ENCODE measurements at regions of chr11 and their contacts with region 1.

Region 1: GRCh38 chr11:22343371-22344032 is 5.3 kb downstream of the SLC17A6 start:
- DNase-seq: no peak
- H3K4me3 ChIP-seq: no peak overlapping the region
- H3K27ac ChIP-seq: no peak overlapping the region
- H3K4me1 ChIP-seq: no peaks in the 10 kb centered on the region
- H3K27me3 ChIP-seq: peaks cover 84% of the 10 kb centered on the region
- CTCF ChIP-seq: no peak
- EP300 ChIP-seq: no peak
- POLR2A ChIP-seq: no peak

Region 2: DNA sequence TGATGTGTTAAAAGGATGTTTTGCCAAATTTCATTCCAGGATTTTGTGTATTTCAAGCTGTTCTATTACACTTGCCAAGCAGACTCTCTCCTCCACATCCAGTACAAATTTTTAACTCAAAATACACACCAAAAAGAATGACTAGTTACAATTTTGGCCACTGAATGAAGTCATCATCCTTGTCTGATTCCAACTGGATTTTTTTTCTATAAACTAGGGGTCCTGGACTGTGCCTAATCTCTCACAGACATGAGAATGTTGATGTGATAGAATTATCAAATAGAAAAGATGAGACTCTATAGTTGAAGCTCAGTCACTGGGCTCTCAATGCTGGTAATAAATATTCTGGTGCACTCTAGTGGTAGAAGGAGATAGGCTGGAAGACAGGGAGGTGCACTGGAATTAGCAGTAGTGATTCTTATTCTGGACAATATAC is 196.3 kb after region 1 on chr11:
- in situ Hi-C with region 1: no loop called
- intact Hi-C with region 1: loop called (anchors 10 kb)
- DNase-seq: no peak
- H3K4me3 ChIP-seq: no peak overlapping the region
- H3K27ac ChIP-seq: no peak overlapping the region
- H3K4me1 ChIP-seq: no peaks in the 10 kb centered on the region
- H3K27me3 ChIP-seq: no peaks in the 10 kb centered on the region
- CTCF ChIP-seq: peak in 1 of 5 experiments; percentile 9
- EP300 ChIP-seq: no peak
- POLR2A ChIP-seq: no peak